ENCODE measurements at regions of chrX and their contacts with region 1.

Region 1: GRCh38 chrX:107672955-107673378 is 44.7 kb downstream of the PRPS1 start:
- DNase-seq: peak; percentile 61 to 91 (median 90)
- H3K4me3 ChIP-seq: peak overlapping the region; percentile 66
- H3K4me3 Mint-ChIP-seq: peak overlapping the region; percentile 81 to 87 (median 84)
- H3K27ac ChIP-seq: peak overlapping the region; percentile 99
- H3K27ac Mint-ChIP-seq: peak overlapping the region; percentile 99 to 100 (median 100)
- H3K4me1 ChIP-seq: peaks cover 45% of the 10 kb centered on the region
- H3K4me1 Mint-ChIP-seq: peaks cover 48 to 63% (median 59%) of the 10 kb centered on the region in 3 donors
- H3K27me3 ChIP-seq: no peaks in the 10 kb centered on the region
- H3K27me3 Mint-ChIP-seq: peaks cover 0 to 14% of the 10 kb centered on the region in 2 donors

Region 2: DNA sequence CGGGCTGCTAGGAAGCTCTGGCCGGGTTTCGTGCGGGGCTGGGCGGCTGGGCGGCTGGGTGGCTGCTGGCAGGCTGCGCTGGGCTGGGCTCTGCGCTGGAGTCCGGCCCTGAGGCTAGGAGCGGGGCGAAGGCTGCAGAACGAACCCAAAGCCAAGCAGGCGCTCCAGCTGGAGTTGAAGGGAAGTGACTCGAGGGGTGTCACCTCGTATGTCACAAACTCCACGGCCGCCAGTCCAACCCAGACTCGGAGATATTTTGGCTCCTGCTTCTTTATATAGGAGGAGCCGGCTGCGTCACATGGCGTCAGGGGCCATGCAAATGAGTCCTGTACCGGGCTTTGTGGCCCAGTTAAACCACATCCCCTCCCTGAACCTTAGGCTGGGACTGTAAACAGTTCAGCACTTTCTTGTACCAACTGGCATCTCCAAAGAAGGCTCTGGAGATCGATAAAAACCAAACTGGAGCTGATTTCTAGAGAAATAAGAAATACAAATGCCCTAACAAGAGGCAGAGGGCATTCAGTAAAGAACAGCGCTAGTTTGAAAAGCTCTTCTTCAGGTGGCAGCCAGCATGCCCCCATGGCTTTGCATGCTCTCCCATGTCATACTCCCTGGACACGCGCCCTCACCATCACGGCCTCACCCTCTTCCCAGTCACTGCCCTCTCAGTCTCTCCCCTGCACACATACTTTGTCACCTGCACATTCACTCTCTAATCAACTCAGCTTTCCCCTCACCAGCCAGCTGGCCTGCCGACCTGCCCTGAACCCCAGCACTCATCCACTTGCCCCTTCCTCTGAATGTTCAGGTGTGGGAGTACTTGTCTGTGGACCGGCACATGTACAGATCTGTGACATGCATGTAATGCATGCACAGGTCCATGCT is 44.1 kb after region 1 on chrX:
- CTCF ChIA-PET with region 1: interaction called, 300 read pairs
- POLR2A ChIA-PET with region 1: interaction called, 330 read pairs
- DNase-seq: peak; percentile 78 to 96 (median 93)
- H3K4me3 ChIP-seq: peak overlapping the region; percentile 77
- H3K4me3 Mint-ChIP-seq: peak overlapping the region; percentile 92 to 100 (median 94)
- H3K27ac ChIP-seq: peak overlapping the region; percentile 99
- H3K27ac Mint-ChIP-seq: peak overlapping the region; percentile 96 to 100 (median 98)
- H3K4me1 ChIP-seq: peaks cover 44% of the 10 kb centered on the region
- H3K4me1 Mint-ChIP-seq: peaks cover 48 to 56% (median 54%) of the 10 kb centered on the region in 3 donors
- H3K27me3 ChIP-seq: no peaks in the 10 kb centered on the region
- H3K27me3 Mint-ChIP-seq: peaks cover 0 to 44% of the 10 kb centered on the region in 2 donors

Measured in CD8-positive, alpha-beta memory T cell (primary cell).